ENCODE measurements at regions of chr14 and their contacts with region 1.

Region 1: GRCh38 chr14:22973217-22974032 is 8.9 kb downstream of the AJUBA start:
- DNase-seq: peak; percentile 82
- ATAC-seq: no peak
- H3K4me3 ChIP-seq: no peak overlapping the region
- H3K27ac ChIP-seq: peak overlapping the region; percentile 97
- H3K4me1 ChIP-seq: peaks cover 65% of the 10 kb centered on the region
- H3K27me3 ChIP-seq: no peaks in the 10 kb centered on the region
- CTCF ChIP-seq: no peak
- EP300 ChIP-seq: no peak
- POLR2A ChIP-seq: peak in 1 of 2 experiments; percentile 73; a peak in 2 of 4 replicates
- RAD21 ChIP-seq: peak; percentile 97

Region 2: GRCh38 chr14:22726012-22726411 is 247.4 kb before region 1 on chr14:
- CTCF ChIA-PET with region 1: no interaction called
- POLR2A ChIA-PET with region 1: no interaction called
- in situ Hi-C with region 1: no loop called
- intact Hi-C with region 1: no loop called
- DNase-seq: no peak
- ATAC-seq: peak; percentile 42
- H3K4me3 ChIP-seq: no peak overlapping the region
- H3K27ac ChIP-seq: no peak overlapping the region
- H3K4me1 ChIP-seq: no peaks in the 10 kb centered on the region
- H3K27me3 ChIP-seq: peaks cover 0 to 43% of the 10 kb centered on the region in 2 experiments
- CTCF ChIP-seq: no peak
- EP300 ChIP-seq: no peak
- POLR2A ChIP-seq: no peak
- RAD21 ChIP-seq: no peak

Region 3: GRCh38 chr14:22918804-22919600 is 54.4 kb before region 1 on chr14 and contains the start of gene RBM23:
- CTCF ChIA-PET with region 1: no interaction called
- POLR2A ChIA-PET with region 1: interaction called, 18 read pairs
- in situ Hi-C with region 1: no loop called
- intact Hi-C with region 1: no loop called
- DNase-seq: peak; percentile 36
- ATAC-seq: no peak
- H3K4me3 ChIP-seq: no peak within 1 kb of the TSS
- H3K27ac ChIP-seq: no peak within 1 kb of the TSS
- H3K4me1 ChIP-seq: peaks cover 33% of the 10 kb centered on the region
- H3K27me3 ChIP-seq: no peaks in the 10 kb centered on the region
- CTCF ChIP-seq: no peak
- EP300 ChIP-seq: no peak
- POLR2A ChIP-seq: no peak
- RAD21 ChIP-seq: no peak
- total RNA-seq, gene RBM23: 0.52 and 1.5 TPM in 2 replicates

Region 4: DNA sequence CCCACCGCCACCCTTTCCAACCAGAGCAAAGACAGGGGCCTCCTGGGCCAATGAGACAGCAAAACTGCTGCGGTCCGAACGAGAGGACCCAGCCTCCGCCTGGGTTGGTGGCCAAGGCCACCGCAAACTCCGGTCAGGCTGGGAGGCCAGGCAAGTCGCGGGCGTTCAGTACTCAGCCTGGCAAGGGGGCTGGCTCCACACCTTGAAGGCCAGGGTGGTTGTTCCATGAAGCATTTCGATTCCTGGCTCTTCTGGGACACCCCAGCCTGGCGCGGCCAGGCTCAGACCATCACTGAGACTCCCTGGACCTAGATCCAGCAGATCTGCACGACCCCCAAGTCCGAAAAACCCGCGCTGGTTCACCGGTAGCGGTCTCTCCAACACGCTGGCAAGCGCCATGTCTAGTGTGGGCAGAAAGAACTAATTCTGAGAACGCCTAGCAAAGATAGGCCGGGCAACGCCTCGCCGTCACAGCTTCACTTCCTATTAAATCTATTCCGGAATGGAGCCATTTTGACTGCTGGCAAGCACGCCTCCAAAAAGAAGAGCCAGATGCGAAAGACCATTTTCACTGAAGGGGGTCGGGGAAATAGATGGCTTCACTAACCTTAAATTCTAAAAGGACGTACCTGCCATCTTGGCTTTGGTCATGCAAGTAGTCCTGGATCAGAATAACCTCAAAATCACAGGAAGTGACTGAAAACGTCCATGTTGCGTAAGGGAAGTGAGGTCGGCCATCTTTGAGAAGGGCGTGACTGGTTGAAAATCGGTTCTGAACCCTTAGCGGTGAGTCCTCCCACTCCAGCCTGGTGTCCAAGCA is 61.3 kb after region 1 on chr14 and contains the start of gene PSMB5:
- CTCF ChIA-PET with region 1: interaction called, 3 read pairs
- POLR2A ChIA-PET with region 1: interaction called, 11 read pairs
- in situ Hi-C with region 1: no loop called
- intact Hi-C with region 1: no loop called
- DNase-seq: peak; percentile 100
- ATAC-seq: peak; percentile 96
- H3K4me3 ChIP-seq: peak within 1 kb of the TSS; percentile 78 to 86 (median 80)
- H3K27ac ChIP-seq: peak within 1 kb of the TSS; percentile 90
- H3K4me1 ChIP-seq: peaks cover 38% of the 10 kb centered on the region
- H3K27me3 ChIP-seq: no peaks in the 10 kb centered on the region; a peak in 1 of 5 replicates
- CTCF ChIP-seq: peak; percentile 14
- EP300 ChIP-seq: peak; percentile 3 to 52; a peak in 2 of 4 replicates
- POLR2A ChIP-seq: peak in 1 of 2 experiments; percentile 98; a peak in 2 of 4 replicates
- RAD21 ChIP-seq: peak; percentile 49; the same call in 1 of the 2 replicates
- total RNA-seq, gene PSMB5: 871 and 1,316 TPM in 2 replicates

Region 5: GRCh38 chr14:23076785-23077408 is 103.5 kb after region 1 on chr14:
- CTCF ChIA-PET with region 1: no interaction called
- POLR2A ChIA-PET with region 1: interaction called, 30 read pairs
- in situ Hi-C with region 1: no loop called
- intact Hi-C with region 1: no loop called
- DNase-seq: peak; percentile 68
- ATAC-seq: peak; percentile 57
- H3K4me3 ChIP-seq: no peak overlapping the region
- H3K27ac ChIP-seq: no peak overlapping the region
- H3K4me1 ChIP-seq: peaks cover 9% of the 10 kb centered on the region
- H3K27me3 ChIP-seq: no peaks in the 10 kb centered on the region
- CTCF ChIP-seq: peak; percentile 70
- EP300 ChIP-seq: no peak
- POLR2A ChIP-seq: no peak
- RAD21 ChIP-seq: no peak

Region 6: GRCh38 chr14:23195550-23196101 is 222.2 kb after region 1 on chr14:
- CTCF ChIA-PET with region 1: no interaction called
- POLR2A ChIA-PET with region 1: no interaction called
- in situ Hi-C with region 1: no loop called
- intact Hi-C with region 1: no loop called
- DNase-seq: peak; percentile 35
- ATAC-seq: peak; percentile 49
- H3K4me3 ChIP-seq: no peak overlapping the region
- H3K27ac ChIP-seq: no peak overlapping the region
- H3K4me1 ChIP-seq: peaks cover 24% of the 10 kb centered on the region
- H3K27me3 ChIP-seq: 0 out of 5 replicates have a peak, but pooled peaks cover 0 to 3% of the 10 kb centered on the region in 2 experiments
- CTCF ChIP-seq: no peak
- EP300 ChIP-seq: peak in 1 of 2 experiments; percentile 28; a peak in 1 of 4 replicates
- POLR2A ChIP-seq: no peak
- RAD21 ChIP-seq: no peak